ENCODE measurements at regions of chr16 and their contacts with region 1.

Region 1: DNA sequence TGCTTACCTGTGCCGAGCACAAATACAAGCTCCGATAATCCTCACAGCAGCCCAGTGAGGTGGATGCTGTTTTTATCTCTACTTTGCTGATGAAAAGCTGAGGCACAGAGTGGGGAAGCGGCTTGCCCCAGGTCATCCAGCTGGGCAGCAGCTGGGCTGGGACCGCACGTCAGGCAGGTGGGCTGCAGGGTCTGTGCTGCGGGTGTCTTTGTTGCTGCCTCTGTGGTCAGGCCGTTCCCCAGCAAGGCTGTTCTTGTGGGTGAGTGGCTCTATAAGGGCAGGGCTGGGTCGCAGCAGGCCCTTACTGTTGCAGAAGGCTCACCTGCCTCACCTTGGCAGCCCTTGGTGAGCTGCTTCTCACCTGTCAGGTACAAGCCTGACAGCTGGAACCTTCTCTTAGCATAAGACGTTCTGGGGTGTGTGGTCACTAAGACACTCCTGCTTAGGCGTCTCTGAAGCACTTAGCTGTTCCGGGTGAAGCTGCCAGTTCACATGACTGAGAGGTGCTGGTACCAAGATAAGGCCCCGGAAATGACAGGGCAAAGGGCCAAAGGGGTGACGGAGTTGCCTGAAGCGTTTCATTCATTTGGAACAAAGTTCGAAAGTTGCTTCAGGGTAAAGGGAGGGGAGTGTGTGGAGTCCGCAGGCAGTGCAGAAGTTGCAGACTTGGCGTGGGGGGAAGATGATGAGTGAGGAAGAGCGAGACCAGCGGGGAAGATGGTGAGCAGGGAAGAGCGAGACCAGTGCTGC is 17.4 kb downstream of the IRF8 start:
- DNase-seq: no peak
- ATAC-seq: no peak
- H3K4me3 Mint-ChIP-seq: peak overlapping the region; percentile 16
- H3K27ac Mint-ChIP-seq: peak overlapping the region; percentile 97
- H3K4me1 Mint-ChIP-seq: peaks cover 86% of the 10 kb centered on the region
- H3K27me3 Mint-ChIP-seq: no peaks in the 10 kb centered on the region
- CTCF ChIP-seq: no peak

Region 2: GRCh38 chr16:85928401-85928820 is 12.1 kb after region 1 on chr16:
- CTCF ChIA-PET with region 1: interaction called, 4 read pairs
- POLR2A ChIA-PET with region 1: interaction called, 9 read pairs
- intact Hi-C with region 1: loop called (anchors 1 kb)
- DNase-seq: no peak
- ATAC-seq: peak; percentile 29
- H3K4me3 Mint-ChIP-seq: peak overlapping the region; percentile 68
- H3K27ac Mint-ChIP-seq: peak overlapping the region; percentile 80
- H3K4me1 Mint-ChIP-seq: peaks cover 86% of the 10 kb centered on the region
- H3K27me3 Mint-ChIP-seq: no peaks in the 10 kb centered on the region
- CTCF ChIP-seq: no peak

Region 3: DNA sequence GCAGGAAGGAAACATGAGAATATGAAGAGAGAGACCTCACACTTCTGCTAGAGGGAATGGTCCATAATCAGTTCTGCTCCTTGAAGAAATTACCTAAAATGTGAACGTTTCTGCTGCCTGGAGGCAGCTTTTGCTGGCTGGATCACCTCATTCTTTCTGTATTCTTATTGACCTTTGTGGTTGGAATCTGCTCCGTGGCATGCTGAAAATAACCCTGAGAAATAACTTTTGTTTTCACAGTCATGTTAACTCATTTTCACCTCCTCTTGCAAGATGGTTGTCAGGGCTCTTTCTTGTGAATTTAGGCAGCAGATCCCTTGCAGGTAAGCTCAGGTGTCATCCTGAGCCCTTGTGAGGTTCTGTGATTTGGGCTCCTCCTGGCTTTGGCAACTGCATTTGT is 52.8 kb after region 1 on chr16:
- CTCF ChIA-PET with region 1: no interaction called
- POLR2A ChIA-PET with region 1: interaction called, 4 read pairs
- intact Hi-C with region 1: loop called (anchors 5 kb)
- DNase-seq: no peak
- ATAC-seq: no peak
- H3K4me3 Mint-ChIP-seq: no peak overlapping the region
- H3K27ac Mint-ChIP-seq: peak overlapping the region; percentile 0
- H3K4me1 Mint-ChIP-seq: peaks cover 60% of the 10 kb centered on the region
- H3K27me3 Mint-ChIP-seq: no peaks in the 10 kb centered on the region
- CTCF ChIP-seq: no peak

Region 4: DNA sequence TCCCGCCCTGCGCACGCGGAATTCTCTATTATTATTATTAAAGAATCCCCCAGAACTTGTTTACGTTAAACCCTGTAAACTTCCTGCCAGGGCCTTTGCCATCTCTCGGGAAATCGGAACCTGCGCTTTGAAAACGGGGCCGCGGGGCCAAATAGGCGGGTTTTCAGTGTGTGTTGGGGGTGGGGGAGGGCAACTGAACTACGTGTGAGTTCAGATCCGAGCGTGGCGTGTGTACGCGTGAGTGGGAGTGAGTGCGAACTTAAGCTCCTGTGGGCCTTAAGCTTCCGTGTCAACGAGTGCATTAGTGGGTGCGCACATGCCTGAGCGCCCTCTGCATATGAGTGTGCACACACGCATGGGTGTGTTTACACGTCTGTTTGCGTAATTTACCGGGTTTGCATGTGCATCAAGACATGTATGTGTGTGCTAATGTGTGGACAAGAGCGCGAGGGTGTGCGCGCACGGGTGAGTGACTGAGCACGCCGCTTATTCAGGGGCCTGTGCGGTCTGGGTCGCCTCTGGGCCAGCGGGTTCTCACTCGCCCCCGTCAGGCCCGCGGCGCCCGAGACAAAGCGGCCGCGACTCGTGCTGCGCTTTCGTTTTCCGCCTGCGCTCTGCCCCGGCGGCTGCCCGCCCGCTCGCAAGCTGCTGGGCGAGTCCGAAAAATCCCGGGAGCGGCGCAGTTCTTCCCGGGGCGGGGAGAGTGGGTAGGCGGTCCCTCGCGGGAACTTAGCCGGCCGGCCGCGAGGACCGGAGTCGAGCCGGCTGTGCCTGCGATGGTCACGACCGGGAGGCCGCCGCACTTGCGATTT is 592.8 kb after region 1 on chr16:
- CTCF ChIA-PET with region 1: no interaction called
- POLR2A ChIA-PET with region 1: no interaction called
- intact Hi-C with region 1: loop called (anchors 5 kb)
- DNase-seq: peak; percentile 46
- ATAC-seq: peak; percentile 57
- H3K4me3 Mint-ChIP-seq: peak overlapping the region; percentile 82
- H3K27ac Mint-ChIP-seq: peak overlapping the region; percentile 41
- H3K4me1 Mint-ChIP-seq: peaks cover 29% of the 10 kb centered on the region
- H3K27me3 Mint-ChIP-seq: peaks cover 57% of the 10 kb centered on the region
- CTCF ChIP-seq: no peak